HepG2 (cell line): ENCODE measurements at regions of chr4 and their contacts with region 1.

Region 1: DNA sequence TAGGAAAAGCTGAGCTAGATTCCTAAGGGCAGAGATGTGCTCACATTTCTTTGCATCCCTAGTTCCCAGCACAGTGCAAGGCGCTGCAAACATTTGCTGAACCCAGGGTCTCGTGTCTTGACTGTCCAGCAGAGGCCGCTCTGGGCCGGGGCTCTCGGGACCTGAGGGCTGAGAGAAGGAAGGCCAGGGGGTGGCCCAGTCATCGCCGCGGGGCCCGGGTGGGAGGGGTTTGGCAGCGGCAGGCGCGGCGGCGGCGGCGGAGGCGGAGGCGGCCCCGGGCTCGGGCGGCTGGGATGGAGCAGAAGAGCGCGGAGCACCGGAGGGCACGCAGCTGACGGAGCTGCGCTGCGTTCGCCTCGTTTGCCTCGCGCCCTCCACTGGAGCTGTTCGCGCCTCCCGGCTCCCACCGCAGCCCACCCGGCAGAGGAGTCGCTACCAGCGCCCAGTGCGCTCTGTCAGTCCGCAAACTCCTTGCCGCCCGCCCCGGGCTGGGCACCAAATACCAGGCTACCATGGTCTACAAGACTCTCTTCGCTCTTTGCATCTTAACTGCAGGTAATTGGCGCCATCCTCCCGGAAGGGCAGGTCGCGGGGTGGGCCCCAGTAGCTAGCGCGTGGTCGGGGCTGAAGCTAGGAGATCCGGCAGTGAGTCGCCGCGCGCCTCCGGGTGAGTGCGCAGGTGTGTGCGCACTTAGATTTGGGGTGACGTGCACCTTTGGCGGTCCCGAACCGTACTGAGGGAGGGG is at the start of gene PARM1:
- DNase-seq: peak; percentile 59
- ATAC-seq: peak; percentile 98
- H3K4me3 ChIP-seq: peak within 1 kb of the TSS; percentile 30 to 61 (median 37); a peak in 4 of 6 replicates
- H3K27ac ChIP-seq: no peak within 1 kb of the TSS
- H3K4me1 ChIP-seq: peaks cover 15% of the 10 kb centered on the region
- H3K27me3 ChIP-seq: peaks cover 7 to 22% of the 10 kb centered on the region in 2 experiments
- CTCF ChIP-seq: peak; percentile 82
- EP300 ChIP-seq: no peak
- POLR2A ChIP-seq: no peak
- RAD21 ChIP-seq: peak; percentile 68
- total RNA-seq, gene PARM1: not detected in 2 replicates

Region 2: DNA sequence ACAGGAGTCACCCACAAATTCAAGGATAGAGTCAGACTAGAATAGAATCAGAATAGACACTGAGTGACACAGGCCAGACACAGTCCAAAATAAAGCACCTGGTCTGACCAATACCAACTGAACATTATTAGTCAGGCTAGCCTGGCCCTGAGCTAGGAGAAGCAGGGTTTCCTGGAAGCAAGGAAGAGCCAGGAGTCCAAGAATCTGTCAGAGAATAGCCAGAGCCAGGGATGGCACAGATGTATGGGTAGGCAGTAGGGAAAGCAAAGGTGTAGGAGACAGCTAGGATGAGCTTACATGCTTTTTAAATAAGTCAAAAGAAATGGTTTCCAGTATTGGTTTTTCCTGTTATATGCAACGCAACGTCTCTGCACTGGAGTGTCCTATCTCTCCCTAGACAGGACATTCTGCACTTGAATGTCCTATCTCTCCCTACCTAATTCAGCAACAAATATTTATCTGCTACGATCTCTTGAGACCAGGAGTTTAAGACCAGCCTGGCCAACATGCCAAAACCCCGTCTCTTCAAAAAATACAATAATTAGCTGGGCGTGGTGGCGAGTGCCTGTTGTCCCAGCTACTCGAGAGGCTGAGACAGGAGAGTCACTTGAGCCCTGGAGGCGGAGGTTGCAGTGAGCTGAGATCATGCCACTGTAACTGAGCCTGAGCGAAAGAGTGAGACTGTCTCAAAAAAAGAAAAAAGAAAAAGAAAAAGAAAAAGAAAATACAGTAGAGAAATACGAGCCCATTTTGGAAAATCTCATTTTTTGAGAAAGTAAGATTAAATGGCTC is 142.1 kb before region 1 on chr4:
- CTCF ChIA-PET with region 1: no interaction called
- POLR2A ChIA-PET with region 1: no interaction called
- in situ Hi-C with region 1: no loop called
- intact Hi-C with region 1: no loop called
- DNase-seq: no peak
- ATAC-seq: no peak
- H3K4me3 ChIP-seq: no peak overlapping the region
- H3K27ac ChIP-seq: no peak overlapping the region
- H3K4me1 ChIP-seq: no peaks in the 10 kb centered on the region
- H3K27me3 ChIP-seq: peaks cover 0 to 21% of the 10 kb centered on the region in 2 experiments; a peak in 2 of 5 replicates
- CTCF ChIP-seq: no peak
- EP300 ChIP-seq: no peak
- POLR2A ChIP-seq: no peak
- RAD21 ChIP-seq: no peak

Region 3: GRCh38 chr4:74944328-74944793 is 11.4 kb after region 1 on chr4:
- CTCF ChIA-PET with region 1: no interaction called
- POLR2A ChIA-PET with region 1: no interaction called
- in situ Hi-C with region 1: no loop called
- intact Hi-C with region 1: no loop called
- DNase-seq: no peak
- ATAC-seq: no peak
- H3K4me3 ChIP-seq: no peak overlapping the region
- H3K27ac ChIP-seq: no peak overlapping the region
- H3K4me1 ChIP-seq: no peaks in the 10 kb centered on the region
- H3K27me3 ChIP-seq: no peaks in the 10 kb centered on the region
- CTCF ChIP-seq: no peak
- EP300 ChIP-seq: no peak
- POLR2A ChIP-seq: no peak
- RAD21 ChIP-seq: no peak

Region 4: DNA sequence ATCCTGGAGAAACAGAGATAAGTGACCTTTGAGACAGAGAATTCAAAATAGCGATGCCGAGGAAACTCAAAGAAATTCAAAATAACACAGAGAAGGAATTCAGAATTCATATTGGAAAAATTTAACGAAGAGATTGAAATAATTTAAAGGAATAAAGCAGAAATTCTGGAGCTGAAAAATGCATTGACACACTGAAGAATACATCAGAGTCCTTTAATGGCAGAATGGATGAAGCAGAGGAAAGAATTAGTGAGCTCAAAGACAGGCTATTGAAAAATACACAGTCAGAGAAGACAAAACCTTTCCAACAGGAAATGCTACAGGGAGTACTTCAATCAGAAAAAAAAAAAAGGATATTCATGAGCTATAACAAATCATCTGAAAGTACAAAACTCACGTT is 185.8 kb after region 1 on chr4:
- CTCF ChIA-PET with region 1: no interaction called
- POLR2A ChIA-PET with region 1: no interaction called
- in situ Hi-C with region 1: no loop called
- intact Hi-C with region 1: loop called (anchors 5 kb)
- DNase-seq: no peak
- ATAC-seq: no peak
- H3K4me3 ChIP-seq: no peak overlapping the region
- H3K27ac ChIP-seq: no peak overlapping the region
- H3K4me1 ChIP-seq: no peaks in the 10 kb centered on the region
- H3K27me3 ChIP-seq: no peaks in the 10 kb centered on the region
- CTCF ChIP-seq: no peak
- EP300 ChIP-seq: no peak
- POLR2A ChIP-seq: no peak
- RAD21 ChIP-seq: no peak

Region 5: DNA sequence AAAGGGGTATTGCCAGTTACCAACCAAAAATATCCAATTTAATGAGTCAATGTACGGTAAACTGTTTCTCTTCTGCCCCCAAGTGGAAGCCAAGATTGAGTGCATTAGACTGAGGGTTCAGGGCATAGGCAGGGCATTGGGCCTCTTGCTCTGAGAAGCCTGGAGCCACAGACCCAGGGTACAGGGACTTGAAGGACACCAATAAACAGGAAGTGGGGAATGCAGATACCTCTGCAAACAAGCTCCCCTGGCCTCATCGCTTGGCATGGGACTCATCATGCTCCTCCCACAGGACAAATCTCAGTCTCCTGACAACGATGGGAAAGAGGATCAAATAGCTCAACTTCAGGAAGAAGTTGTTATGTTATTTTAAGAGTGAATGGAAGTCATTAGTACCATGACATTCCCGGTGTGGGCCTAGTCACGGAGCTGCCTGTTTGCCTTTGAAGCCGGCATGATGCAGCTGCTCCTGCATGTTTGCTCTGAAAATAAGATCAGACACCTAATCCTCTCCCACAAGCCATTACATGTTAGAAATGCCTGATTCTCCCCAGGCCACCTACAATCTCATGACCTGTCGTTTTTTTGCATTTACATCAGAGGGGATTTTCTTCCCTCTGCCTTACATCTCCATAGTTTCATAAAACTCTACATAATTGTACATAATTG is 357.1 kb after region 1 on chr4:
- CTCF ChIA-PET with region 1: no interaction called
- POLR2A ChIA-PET with region 1: no interaction called
- in situ Hi-C with region 1: no loop called
- intact Hi-C with region 1: loop called (anchors 5 kb)
- DNase-seq: peak; percentile 20
- ATAC-seq: peak; percentile 77
- H3K4me3 ChIP-seq: no peak overlapping the region
- H3K27ac ChIP-seq: no peak overlapping the region
- H3K4me1 ChIP-seq: no peaks in the 10 kb centered on the region
- H3K27me3 ChIP-seq: no peaks in the 10 kb centered on the region
- CTCF ChIP-seq: peak; percentile 47; the same call in 1 of the 2 replicates
- EP300 ChIP-seq: no peak
- POLR2A ChIP-seq: no peak
- RAD21 ChIP-seq: no peak

Region 6: DNA sequence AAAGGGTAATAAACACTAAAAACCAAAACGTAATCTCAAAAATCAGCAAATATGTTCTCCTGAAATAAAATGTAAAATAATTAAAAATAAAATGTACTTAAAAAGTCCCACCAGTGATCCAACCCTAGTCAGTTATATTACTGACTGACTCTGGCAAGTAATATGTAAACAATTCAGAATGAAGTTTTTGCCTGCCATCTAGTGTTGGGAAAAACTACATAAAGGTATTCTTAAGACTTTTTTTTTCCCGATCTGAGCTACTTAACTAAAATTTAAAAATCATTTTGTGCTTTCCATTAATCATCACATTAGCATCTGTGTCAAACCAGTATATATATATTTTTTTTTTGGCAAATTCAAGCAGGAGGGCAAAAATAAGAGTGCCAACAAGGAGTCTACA is 557.2 kb after region 1 on chr4:
- CTCF ChIA-PET with region 1: interaction called, 3 read pairs
- POLR2A ChIA-PET with region 1: no interaction called
- in situ Hi-C with region 1: loop called (anchors 25 kb)
- intact Hi-C with region 1: no loop called
- DNase-seq: no peak
- ATAC-seq: peak; percentile 41; the same call in 1 of the 3 replicates
- H3K4me3 ChIP-seq: no peak overlapping the region
- H3K27ac ChIP-seq: no peak overlapping the region
- H3K4me1 ChIP-seq: peaks cover 5% of the 10 kb centered on the region
- H3K27me3 ChIP-seq: no peaks in the 10 kb centered on the region
- CTCF ChIP-seq: peak; percentile 32
- EP300 ChIP-seq: no peak
- POLR2A ChIP-seq: no peak
- RAD21 ChIP-seq: no peak